Activated T-helper 1 cell treated with anti-CD3 and anti-CD28 coated beads, Interleukin-12 subunit alpha, Interleukin-12 subunit beta, Interleukin-2, Interleukin-4 antibody, amounts not matched to agents 30 ng/mL and 10 ng/mL and 1 ng/mL, durations not matched to agents 14 hours and 24 hours and 36 hours (primary cell): ENCODE measurements at regions of chr20 and their contacts with region 1.

Region 1: DNA sequence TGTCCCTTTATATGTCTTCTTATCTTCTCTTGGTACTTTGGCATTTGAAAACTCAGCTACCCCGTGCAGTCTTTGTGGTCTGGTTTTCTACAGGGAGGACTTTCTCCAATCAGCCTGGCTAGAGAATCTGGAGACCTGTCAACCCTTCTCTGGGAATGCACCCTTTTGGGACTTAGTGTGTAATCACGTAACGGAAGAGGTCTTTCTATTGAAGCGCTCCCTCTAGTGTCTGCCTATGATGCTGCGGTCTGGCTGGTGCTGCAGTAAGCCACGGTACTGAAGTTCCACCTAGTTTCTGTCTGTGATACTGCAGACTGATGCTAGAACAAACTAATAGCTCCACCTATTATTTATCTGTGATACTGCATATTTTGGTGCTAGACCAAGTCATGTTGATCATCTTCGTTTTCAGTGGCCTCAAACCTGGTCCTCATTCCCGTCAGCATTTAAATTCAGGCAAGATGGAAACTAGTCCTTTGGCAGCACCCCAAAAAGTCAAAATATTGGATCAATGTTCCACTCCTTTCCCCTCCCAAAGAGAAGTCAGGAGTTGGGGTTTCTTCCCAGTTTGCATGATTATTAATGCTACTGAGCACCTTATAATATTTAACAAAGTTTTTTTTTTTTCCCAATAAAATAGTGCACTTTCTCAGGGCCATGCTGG is 12.5 kb upstream of the SIRPB2 start:
- DNase-seq: peak; percentile 68
- H3K4me3 Mint-ChIP-seq: no peak overlapping the region
- H3K27ac Mint-ChIP-seq: no peak overlapping the region
- H3K4me1 Mint-ChIP-seq: peaks cover 5% of the 10 kb centered on the region
- H3K27me3 Mint-ChIP-seq: peaks cover 14% of the 10 kb centered on the region

Region 2: GRCh38 chr20:1087311-1087905 is 416.3 kb before region 1 on chr20:
- intact Hi-C with region 1: no loop called
- DNase-seq: no peak
- H3K4me3 Mint-ChIP-seq: no peak overlapping the region
- H3K27ac Mint-ChIP-seq: no peak overlapping the region
- H3K4me1 Mint-ChIP-seq: peaks cover 11% of the 10 kb centered on the region
- H3K27me3 Mint-ChIP-seq: no peaks in the 10 kb centered on the region

Region 3: GRCh38 chr20:1313236-1313964 is 190.3 kb before region 1 on chr20:
- intact Hi-C with region 1: loop called (anchors 1 kb)
- DNase-seq: peak; percentile 47
- H3K4me3 Mint-ChIP-seq: no peak overlapping the region
- H3K27ac Mint-ChIP-seq: no peak overlapping the region
- H3K4me1 Mint-ChIP-seq: peaks cover 16% of the 10 kb centered on the region
- H3K27me3 Mint-ChIP-seq: peaks cover 13% of the 10 kb centered on the region

Region 4: GRCh38 chr20:1443085-1443484 is 60.6 kb before region 1 on chr20:
- intact Hi-C with region 1: no loop called
- DNase-seq: no peak
- H3K4me3 Mint-ChIP-seq: no peak overlapping the region
- H3K27ac Mint-ChIP-seq: no peak overlapping the region
- H3K4me1 Mint-ChIP-seq: no peaks in the 10 kb centered on the region
- H3K27me3 Mint-ChIP-seq: peaks cover 3% of the 10 kb centered on the region

Region 5: DNA sequence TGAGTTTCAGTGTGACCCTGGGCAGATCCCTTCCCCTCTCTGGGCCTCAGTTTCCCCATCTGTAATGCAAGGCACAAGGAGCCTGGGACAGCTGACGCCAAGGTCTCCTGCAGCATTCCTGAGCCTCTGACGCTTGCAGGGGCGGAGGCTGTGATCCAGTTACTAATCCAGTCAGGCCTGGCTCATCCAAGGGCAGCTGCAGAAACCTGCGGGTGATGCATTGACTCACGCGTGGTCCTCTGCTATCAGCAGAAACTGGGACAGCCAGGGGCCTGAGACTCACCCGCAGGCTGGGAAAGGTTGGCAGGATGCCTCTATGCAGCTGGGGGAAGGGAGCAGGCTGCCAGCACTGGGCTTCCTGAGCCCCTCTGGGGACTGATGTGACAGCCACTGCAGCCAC is 326.5 kb after region 1 on chr20:
- intact Hi-C with region 1: no loop called
- DNase-seq: no peak
- H3K4me3 Mint-ChIP-seq: no peak overlapping the region
- H3K27ac Mint-ChIP-seq: no peak overlapping the region
- H3K4me1 Mint-ChIP-seq: no peaks in the 10 kb centered on the region
- H3K27me3 Mint-ChIP-seq: no peaks in the 10 kb centered on the region